ENCODE measurements at regions of chr9 and their contacts with region 1.

Region 1: DNA sequence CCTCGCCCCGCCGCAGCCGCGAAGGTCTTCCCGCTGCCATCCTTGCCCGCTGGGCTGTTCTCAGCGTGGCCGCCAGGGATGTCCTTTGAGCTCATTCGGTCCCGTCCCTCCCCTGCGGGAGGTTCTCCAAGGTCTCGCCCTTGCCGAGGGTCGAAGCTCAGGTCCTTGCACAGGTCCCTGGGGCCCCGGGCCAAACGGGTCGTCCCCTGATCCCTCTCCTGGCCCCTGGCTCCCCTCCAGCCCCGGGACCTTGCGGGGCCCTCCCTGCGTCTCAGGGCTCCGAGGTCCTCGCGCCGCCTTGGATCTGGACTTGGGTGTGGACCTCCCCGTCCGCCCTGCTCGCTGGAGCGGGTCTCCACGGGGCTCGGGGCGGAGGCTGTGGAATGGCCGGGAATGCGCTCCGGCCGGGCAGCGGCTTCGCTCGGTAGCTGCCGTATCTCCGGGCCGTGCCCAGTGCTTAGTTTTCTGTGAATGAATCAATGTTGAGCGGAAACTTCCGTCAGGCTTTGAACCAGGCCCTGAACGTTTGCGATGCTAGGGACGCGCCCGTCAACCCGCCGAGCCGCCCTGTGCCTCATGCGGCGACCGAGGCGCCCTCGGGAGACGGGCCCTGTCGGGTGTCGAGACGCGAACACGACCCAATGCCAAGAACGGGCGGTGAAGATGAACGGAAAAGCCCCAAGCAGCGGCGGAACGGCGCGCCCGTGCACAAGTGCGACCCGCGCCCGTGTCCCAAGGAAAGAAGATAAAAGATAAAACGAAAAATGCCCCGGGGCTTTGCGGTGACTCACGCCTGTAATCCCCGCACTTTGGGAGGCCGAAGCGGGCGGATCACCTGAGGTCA is 789 bp downstream of the RNU6ATAC start:
- DNase-seq: peak in 1 of 2 donors; percentile 84
- H3K4me3 ChIP-seq: no peak overlapping the region
- H3K27ac ChIP-seq: no peak overlapping the region
- H3K4me1 ChIP-seq: peaks cover 8 to 16% of the 10 kb centered on the region in 2 donors
- H3K27me3 ChIP-seq: no peaks in the 10 kb centered on the region
- CTCF ChIP-seq: peak; percentile 43 to 57 (median 48)

Region 2: DNA sequence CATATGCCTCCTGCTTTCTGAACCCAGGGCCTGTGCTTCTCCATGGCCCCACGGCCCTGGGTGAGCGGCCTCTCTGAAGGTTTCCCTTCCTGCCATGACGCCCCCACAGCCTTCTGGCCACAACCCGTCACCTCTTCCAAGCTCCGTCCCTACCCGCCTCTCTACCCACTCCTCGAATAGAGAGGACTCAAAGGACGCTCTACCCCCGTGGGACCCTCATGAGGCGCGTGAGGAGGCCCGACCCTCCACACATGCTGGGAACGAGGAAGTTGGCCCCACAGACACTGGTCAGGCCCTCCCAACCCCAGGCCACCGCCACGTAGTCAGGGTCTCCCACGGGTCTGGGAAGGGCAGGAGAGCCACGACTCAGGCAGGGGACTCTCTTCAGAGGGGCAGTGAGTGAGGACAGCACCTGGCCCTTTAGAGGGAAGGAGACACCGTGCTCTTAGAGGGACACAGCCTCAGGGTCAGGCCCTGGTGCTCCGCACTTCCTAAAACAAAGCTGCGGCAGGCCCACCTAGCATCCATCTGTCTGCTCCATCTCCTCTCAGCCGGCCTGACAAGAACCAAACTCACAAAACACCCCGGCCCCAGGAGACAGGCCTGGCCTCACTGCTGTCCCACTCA is 101.0 kb before region 1 on chr9:
- intact Hi-C with region 1: no loop called
- DNase-seq: peak; percentile 7 to 49
- H3K4me3 ChIP-seq: no peak overlapping the region
- H3K27ac ChIP-seq: no peak overlapping the region
- H3K4me1 ChIP-seq: peaks cover 10 to 32% of the 10 kb centered on the region in 2 donors
- H3K27me3 ChIP-seq: no peaks in the 10 kb centered on the region
- CTCF ChIP-seq: no peak

Region 3: GRCh38 chr9:134135343-134136118 is 28.0 kb before region 1 on chr9 and contains the start of gene WDR5:
- intact Hi-C with region 1: loop called (anchors 1 kb)
- DNase-seq: peak; percentile 57 to 93
- H3K4me3 ChIP-seq: peak within 1 kb of the TSS; percentile 90 to 96
- H3K27ac ChIP-seq: peak within 1 kb of the TSS; percentile 76 to 82
- H3K4me1 ChIP-seq: peaks cover 11 to 39% of the 10 kb centered on the region in 2 donors
- H3K27me3 ChIP-seq: no peaks in the 10 kb centered on the region
- CTCF ChIP-seq: peak in 1 of 3 experiments; percentile 12
- total RNA-seq, gene WDR5: 13.9 TPM

Measured in ascending aorta (tissue), 2 donors.